CD14-positive monocyte (primary cell): ENCODE measurements at regions of chr13 and their contacts with region 1.

Region 1: DNA sequence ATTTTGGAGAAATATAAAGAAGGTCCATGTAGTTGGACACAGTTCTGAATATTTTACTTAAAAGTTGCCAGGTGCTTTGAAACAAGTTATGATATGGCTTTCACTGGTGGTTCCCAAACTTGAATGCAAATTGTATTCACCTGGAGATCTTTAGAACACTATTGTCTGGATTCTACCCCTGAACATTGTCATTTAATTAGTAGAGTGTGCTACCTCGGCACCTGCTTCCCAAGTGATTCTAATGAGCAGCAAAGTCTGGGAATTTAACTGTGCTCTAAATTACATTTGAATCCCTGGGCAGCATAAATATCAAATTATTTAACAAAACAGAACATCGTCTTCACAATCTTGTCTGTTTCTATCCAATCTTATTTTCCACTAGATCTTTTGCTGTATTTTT is 2483.3 kb downstream of the PCDH9 start:
- DNase-seq: no peak
- H3K4me3 ChIP-seq: no peak overlapping the region
- H3K4me3 Mint-ChIP-seq: no peak overlapping the region
- H3K27ac ChIP-seq: no peak overlapping the region
- H3K27ac Mint-ChIP-seq: no peak overlapping the region
- H3K4me1 ChIP-seq: no peaks in the 10 kb centered on the region
- H3K4me1 Mint-ChIP-seq: no peaks in the 10 kb centered on the region
- H3K27me3 ChIP-seq: no peaks in the 10 kb centered on the region
- H3K27me3 Mint-ChIP-seq: no peaks in the 10 kb centered on the region
- CTCF ChIP-seq: no peak

Region 2: GRCh38 chr13:64782466-64782865 is 35.6 kb after region 1 on chr13:
- intact Hi-C with region 1: loop called in 1 of 2 experiments (anchors 2 kb)
- DNase-seq: no peak
- H3K4me3 ChIP-seq: no peak overlapping the region
- H3K4me3 Mint-ChIP-seq: no peak overlapping the region
- H3K27ac ChIP-seq: no peak overlapping the region
- H3K27ac Mint-ChIP-seq: no peak overlapping the region
- H3K4me1 ChIP-seq: no peaks in the 10 kb centered on the region
- H3K4me1 Mint-ChIP-seq: no peaks in the 10 kb centered on the region
- H3K27me3 ChIP-seq: no peaks in the 10 kb centered on the region
- H3K27me3 Mint-ChIP-seq: no peaks in the 10 kb centered on the region
- CTCF ChIP-seq: no peak